H1 (cell line): ENCODE measurements at regions of chr16 and their contacts with region 1.

Region 1: DNA sequence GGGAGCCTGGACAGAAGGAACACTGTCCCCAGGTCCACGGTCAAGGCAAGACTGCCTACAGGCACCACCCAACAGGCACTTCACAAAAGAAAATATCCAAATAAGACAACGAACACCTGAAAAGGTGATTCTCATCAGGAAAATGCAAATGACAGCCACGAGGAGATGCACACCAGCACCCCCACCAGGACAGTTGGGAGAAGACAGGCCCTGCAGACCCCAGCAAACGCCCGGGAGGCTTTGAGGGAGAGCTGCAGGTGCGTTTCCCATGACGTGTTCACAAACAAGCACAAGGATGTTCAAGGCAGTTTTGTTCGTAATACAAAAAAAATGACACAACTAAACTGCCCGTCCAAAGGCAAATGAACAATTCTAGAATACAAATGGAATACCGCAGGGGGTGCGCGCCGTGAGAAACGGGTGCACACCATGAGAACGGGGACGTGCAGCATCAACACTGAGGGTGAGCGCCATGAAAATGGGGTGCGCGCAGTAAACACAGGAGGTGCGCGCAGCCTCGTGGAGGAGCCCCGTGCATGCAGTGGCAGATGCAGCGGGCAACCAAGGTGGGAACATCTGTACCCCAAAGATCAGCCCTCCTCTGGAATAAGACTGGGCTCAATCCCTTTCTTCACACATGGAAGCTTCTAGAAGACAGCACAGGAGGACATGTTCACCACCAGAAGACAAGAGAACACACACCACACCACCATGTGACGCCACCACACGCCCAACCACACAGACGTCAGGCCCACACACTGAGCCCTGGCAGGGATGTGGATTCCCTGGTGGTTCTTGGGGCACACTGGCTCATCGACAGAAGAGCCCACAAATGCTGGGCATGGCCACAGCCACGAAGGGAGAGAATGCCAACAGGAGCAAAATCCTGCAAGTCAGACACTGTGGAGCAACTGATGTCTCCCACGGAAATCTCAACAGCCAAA is 91.2 kb downstream of the ZNF778 start:
- DNase-seq: peak in 1 of 2 experiments; percentile 90
- H3K4me3 ChIP-seq: no peak overlapping the region
- H3K27ac ChIP-seq: no peak overlapping the region
- H3K4me1 ChIP-seq: peaks cover 0 to 6% (median 0%) of the 10 kb centered on the region in 4 experiments; a peak in 1 of 7 replicates
- H3K27me3 ChIP-seq: no peaks in the 10 kb centered on the region
- CTCF ChIP-seq: peak; percentile 75 to 88 (median 87)
- EP300 ChIP-seq: no peak
- POLR2A ChIP-seq: no peak
- RAD21 ChIP-seq: peak; percentile 62 to 68

Region 2: GRCh38 chr16:89297156-89297883 is 11.3 kb before region 1 on chr16:
- CTCF ChIA-PET with region 1: interaction called, 42 read pairs
- POLR2A ChIA-PET with region 1: interaction called, 13 read pairs
- DNase-seq: no peak
- H3K4me3 ChIP-seq: no peak overlapping the region
- H3K27ac ChIP-seq: no peak overlapping the region
- H3K4me1 ChIP-seq: peaks cover 7 to 50% (median 40%) of the 10 kb centered on the region in 4 experiments
- H3K27me3 ChIP-seq: no peaks in the 10 kb centered on the region
- CTCF ChIP-seq: no peak
- EP300 ChIP-seq: no peak
- POLR2A ChIP-seq: no peak
- RAD21 ChIP-seq: no peak

Region 3: DNA sequence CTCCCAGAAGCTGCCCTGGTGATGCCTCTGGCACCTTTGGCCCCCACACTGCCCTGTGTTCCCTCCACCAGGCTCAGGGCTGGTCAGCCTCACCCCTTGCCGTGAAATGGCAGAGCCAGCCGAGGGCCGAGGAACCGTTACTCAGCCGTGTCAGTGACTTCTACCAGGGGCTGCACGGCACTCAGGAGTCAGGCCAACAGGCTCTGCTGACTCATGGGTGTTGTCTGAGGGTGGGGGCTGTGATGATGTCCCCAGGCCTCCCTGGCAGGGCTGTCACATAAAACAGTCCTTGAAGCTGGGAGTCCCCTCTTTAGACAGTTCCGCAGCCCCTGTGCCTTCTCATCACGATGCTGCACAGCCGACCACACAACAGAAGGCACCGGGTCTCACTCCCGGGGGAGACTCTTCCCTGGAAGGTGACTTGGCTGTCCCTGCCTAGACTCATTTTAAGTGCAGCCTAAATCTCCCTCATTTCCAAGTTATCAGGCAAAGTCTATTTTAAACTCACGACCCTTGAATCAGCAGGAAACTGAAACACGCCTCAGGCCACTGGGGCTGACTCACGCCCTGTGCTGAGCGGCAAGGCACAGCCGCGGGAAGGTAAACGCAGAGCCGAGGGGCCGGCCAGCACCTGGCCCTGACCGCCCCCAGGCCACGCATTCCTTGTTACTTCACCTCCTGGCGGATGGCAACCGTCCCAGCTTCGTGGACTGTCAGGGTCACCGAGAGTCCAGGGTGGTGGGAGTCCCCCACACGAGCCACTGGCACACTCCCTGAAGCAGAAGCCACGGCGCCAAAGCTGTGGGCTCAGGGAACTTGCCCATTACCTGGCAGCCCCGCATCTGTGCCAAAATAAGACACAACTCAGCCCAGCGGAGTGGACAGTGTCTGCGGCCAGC is 11.5 kb after region 1 on chr16:
- CTCF ChIA-PET with region 1: interaction called, 17 read pairs
- POLR2A ChIA-PET with region 1: interaction called, 5 read pairs
- DNase-seq: no peak
- H3K4me3 ChIP-seq: no peak overlapping the region
- H3K27ac ChIP-seq: 0 out of 2 replicates have a peak overlapping the region, but pooled peaks have one; percentile 4
- H3K4me1 ChIP-seq: peaks cover 13 to 66% (median 45%) of the 10 kb centered on the region in 4 experiments
- H3K27me3 ChIP-seq: no peaks in the 10 kb centered on the region
- CTCF ChIP-seq: no peak
- EP300 ChIP-seq: no peak
- POLR2A ChIP-seq: no peak
- RAD21 ChIP-seq: no peak

Region 4: GRCh38 chr16:89334988-89335802 is 26.5 kb after region 1 on chr16:
- CTCF ChIA-PET with region 1: interaction called, 10 read pairs
- POLR2A ChIA-PET with region 1: interaction called, 3 read pairs
- DNase-seq: no peak
- H3K4me3 ChIP-seq: no peak overlapping the region
- H3K27ac ChIP-seq: 0 out of 2 replicates have a peak overlapping the region, but pooled peaks have one; percentile 27
- H3K4me1 ChIP-seq: peaks cover 5 to 16% (median 11%) of the 10 kb centered on the region in 4 experiments; a peak in 6 of 7 replicates
- H3K27me3 ChIP-seq: no peaks in the 10 kb centered on the region
- CTCF ChIP-seq: peak in 2 of 3 experiments; percentile 44 to 52; a peak in 2 of 4 replicates
- EP300 ChIP-seq: no peak
- POLR2A ChIP-seq: no peak
- RAD21 ChIP-seq: peak in 1 of 2 experiments; percentile 14; a peak in 1 of 4 replicates

Region 5: DNA sequence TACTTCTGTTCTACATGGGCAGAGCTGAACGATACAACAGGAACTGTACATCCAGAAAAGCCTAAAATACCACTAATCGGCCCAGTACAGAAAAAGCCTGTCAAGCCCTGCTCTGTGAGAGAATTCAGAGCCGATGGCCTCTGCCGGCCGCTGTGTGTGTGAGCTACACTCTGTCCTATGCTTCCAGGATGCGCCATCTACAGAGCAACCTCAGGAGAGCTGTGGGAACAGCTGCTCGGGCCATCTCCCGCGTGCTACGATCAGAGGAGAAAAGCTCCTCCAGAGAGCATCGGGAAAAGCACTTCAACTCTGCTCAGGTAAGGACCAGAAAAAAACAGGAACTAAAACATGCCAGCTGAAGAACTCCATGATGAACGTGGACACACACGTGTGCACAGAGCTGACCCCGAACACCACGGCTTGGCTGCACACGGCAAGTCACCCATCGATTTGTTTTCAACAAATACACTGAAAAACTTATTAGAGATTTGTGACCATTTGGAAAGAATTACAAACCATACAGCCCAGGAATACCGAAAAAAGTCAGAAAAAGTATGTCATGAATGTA is 65.8 kb after region 1 on chr16:
- CTCF ChIA-PET with region 1: interaction called, 13 read pairs
- POLR2A ChIA-PET with region 1: no interaction called
- DNase-seq: no peak
- H3K4me3 ChIP-seq: no peak overlapping the region
- H3K27ac ChIP-seq: no peak overlapping the region
- H3K4me1 ChIP-seq: peaks cover 3 to 16% (median 4%) of the 10 kb centered on the region in 4 experiments; a peak in 5 of 7 replicates
- H3K27me3 ChIP-seq: no peaks in the 10 kb centered on the region
- CTCF ChIP-seq: peak; percentile 22 to 41 (median 37); a peak in 3 of 4 replicates
- EP300 ChIP-seq: no peak
- POLR2A ChIP-seq: no peak
- RAD21 ChIP-seq: peak; percentile 29 to 43; a peak in 3 of 4 replicates